ENCODE measurements at regions of chr16 and their contacts with region 1.

Region 1: DNA sequence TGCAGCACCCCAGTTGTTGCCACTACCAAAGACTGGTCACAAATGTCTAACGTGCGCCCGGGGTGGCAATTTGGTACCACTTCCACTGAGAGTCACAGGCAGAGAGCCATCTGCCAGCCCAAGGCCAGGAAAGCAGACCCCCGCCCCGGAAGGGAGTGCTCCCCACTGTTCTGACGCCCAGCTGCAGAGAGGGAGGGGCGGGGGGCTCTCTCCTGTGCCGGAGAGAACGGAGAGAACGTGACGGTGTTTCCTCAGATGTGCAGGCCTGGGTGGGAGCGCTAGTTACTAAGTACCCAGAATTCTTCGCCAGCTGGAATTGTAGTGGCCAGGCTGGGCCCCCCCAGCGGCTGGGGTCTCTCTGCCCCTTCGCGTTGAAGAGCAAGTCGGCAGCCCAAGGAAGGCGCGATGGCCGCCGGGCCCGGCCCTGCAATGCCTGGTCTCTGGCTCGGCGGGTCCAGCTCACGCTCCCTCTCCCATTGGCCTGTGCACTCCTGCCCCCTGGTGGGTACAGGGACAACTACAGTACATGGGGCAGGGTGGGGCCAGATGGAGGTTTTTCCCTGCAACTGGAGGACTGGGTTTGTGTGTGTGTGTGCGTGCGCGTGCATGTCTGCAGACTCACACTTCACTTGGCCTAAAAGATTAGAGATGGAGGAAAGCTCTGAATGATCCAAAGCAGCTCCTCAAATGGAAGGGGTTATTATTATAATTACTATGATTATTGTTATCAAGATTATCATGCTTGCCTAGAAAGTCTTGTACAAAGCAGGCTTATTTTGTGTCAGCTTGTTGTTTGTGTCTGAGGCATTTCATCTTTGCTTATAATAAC is 107.1 kb downstream of the AMFR start:
- DNase-seq: peak; percentile 67 to 79 (median 72)
- H3K4me3 ChIP-seq: peak overlapping the region in 1 of 2 donors; percentile 25
- H3K4me3 Mint-ChIP-seq: peak overlapping the region; percentile 39 to 80 (median 57)
- H3K27ac ChIP-seq: no peak overlapping the region
- H3K27ac Mint-ChIP-seq: peak overlapping the region in 2 of 7 donors; percentile 32 to 36
- H3K4me1 ChIP-seq: peaks cover 6% of the 10 kb centered on the region
- H3K4me1 Mint-ChIP-seq: peaks cover 0 to 10% (median 8%) of the 10 kb centered on the region in 4 donors
- H3K27me3 ChIP-seq: no peaks in the 10 kb centered on the region
- H3K27me3 Mint-ChIP-seq: no peaks in the 10 kb centered on the region

Region 2: GRCh38 chr16:55465077-55465896 is 852.9 kb before region 1 on chr16:
- CTCF ChIA-PET with region 1: interaction called, 14 read pairs
- POLR2A ChIA-PET with region 1: no interaction called
- intact Hi-C with region 1: no loop called
- DNase-seq: peak; percentile 70 to 79 (median 74)
- H3K4me3 ChIP-seq: no peak overlapping the region
- H3K4me3 Mint-ChIP-seq: peak overlapping the region in 1 of 8 donors; percentile 22
- H3K27ac ChIP-seq: no peak overlapping the region
- H3K27ac Mint-ChIP-seq: no peak overlapping the region
- H3K4me1 ChIP-seq: no peaks in the 10 kb centered on the region
- H3K4me1 Mint-ChIP-seq: peaks cover 0 to 5% (median 1%) of the 10 kb centered on the region in 4 donors
- H3K27me3 ChIP-seq: no peaks in the 10 kb centered on the region
- H3K27me3 Mint-ChIP-seq: peaks cover 0 to 3% of the 10 kb centered on the region in 2 donors

Region 3: GRCh38 chr16:55944377-55944802 is 373.8 kb before region 1 on chr16:
- CTCF ChIA-PET with region 1: interaction called, 222 read pairs
- POLR2A ChIA-PET with region 1: interaction called, 4 read pairs
- intact Hi-C with region 1: no loop called
- DNase-seq: peak; percentile 40 to 48 (median 44)
- H3K4me3 ChIP-seq: no peak overlapping the region
- H3K4me3 Mint-ChIP-seq: no peak overlapping the region
- H3K27ac ChIP-seq: no peak overlapping the region
- H3K27ac Mint-ChIP-seq: no peak overlapping the region
- H3K4me1 ChIP-seq: no peaks in the 10 kb centered on the region
- H3K4me1 Mint-ChIP-seq: peaks cover 0 to 2% (median 0%) of the 10 kb centered on the region in 4 donors
- H3K27me3 ChIP-seq: no peaks in the 10 kb centered on the region
- H3K27me3 Mint-ChIP-seq: peaks cover 39 to 40% of the 10 kb centered on the region in 2 donors

Region 4: DNA sequence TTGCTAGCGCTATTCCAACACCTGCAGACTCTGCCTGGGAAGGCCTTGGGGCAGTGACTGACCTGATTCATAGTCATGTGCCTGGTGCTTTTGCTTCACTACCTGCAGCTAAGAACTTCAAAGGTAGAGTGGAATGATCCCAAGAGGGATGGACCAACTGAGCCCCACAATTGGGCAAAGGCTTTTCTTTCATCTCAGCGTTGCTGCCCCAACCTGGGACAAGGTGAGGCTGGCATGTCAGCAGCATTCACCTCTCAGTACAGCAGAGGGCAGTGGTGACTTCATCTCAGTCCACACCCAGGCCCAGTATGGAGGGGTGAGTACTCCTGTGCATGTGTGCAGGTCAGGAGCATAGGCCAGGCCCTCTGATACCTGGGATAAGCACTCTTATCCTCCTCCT is 276.5 kb before region 1 on chr16:
- CTCF ChIA-PET with region 1: interaction called, 55 read pairs
- POLR2A ChIA-PET with region 1: interaction called, 5 read pairs
- intact Hi-C with region 1: no loop called
- DNase-seq: peak in 4 of 5 donors; percentile 25 to 47 (median 36)
- H3K4me3 ChIP-seq: no peak overlapping the region
- H3K4me3 Mint-ChIP-seq: no peak overlapping the region
- H3K27ac ChIP-seq: no peak overlapping the region
- H3K27ac Mint-ChIP-seq: no peak overlapping the region
- H3K4me1 ChIP-seq: no peaks in the 10 kb centered on the region
- H3K4me1 Mint-ChIP-seq: no peaks in the 10 kb centered on the region
- H3K27me3 ChIP-seq: no peaks in the 10 kb centered on the region
- H3K27me3 Mint-ChIP-seq: peaks cover 0 to 4% of the 10 kb centered on the region in 2 donors

Region 5: GRCh38 chr16:56183266-56183665 is 134.9 kb before region 1 on chr16:
- CTCF ChIA-PET with region 1: no interaction called
- POLR2A ChIA-PET with region 1: no interaction called
- intact Hi-C with region 1: no loop called
- DNase-seq: no peak
- H3K4me3 ChIP-seq: no peak overlapping the region
- H3K4me3 Mint-ChIP-seq: no peak overlapping the region
- H3K27ac ChIP-seq: no peak overlapping the region
- H3K27ac Mint-ChIP-seq: no peak overlapping the region
- H3K4me1 ChIP-seq: no peaks in the 10 kb centered on the region
- H3K4me1 Mint-ChIP-seq: peaks cover 0 to 1% (median 0%) of the 10 kb centered on the region in 4 donors
- H3K27me3 ChIP-seq: no peaks in the 10 kb centered on the region
- H3K27me3 Mint-ChIP-seq: peaks cover 0 to 6% of the 10 kb centered on the region in 2 donors

Region 6: DNA sequence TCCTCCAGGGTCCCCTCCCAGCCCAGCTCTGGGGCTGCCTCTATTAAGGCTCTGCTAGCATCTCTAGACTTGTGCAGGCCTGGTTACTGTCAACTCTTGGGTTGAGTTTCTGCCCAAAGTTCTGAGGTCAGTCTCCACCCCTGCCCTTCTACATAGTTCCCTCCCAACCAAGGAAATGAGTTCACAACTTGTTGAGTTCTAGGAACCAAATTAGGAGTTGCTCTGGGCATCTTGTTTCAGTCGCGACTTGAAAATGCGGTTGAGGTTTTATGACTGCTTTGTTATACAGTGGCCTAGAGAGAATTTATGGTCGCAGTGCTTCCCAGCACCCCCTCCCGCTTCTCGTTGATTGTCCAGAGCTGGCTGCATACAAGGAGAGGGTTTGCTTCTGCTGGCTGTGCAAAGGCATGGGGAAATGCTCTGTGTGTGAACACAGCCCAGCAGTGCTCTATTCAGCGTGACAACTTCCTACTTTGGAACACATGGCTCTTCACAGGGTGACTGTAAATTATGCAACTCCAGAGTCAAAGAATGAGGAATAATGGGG is 106.7 kb before region 1 on chr16:
- CTCF ChIA-PET with region 1: interaction called, 13 read pairs
- POLR2A ChIA-PET with region 1: no interaction called
- intact Hi-C with region 1: no loop called
- DNase-seq: no peak
- H3K4me3 ChIP-seq: no peak overlapping the region
- H3K4me3 Mint-ChIP-seq: no peak overlapping the region
- H3K27ac ChIP-seq: no peak overlapping the region
- H3K27ac Mint-ChIP-seq: no peak overlapping the region
- H3K4me1 ChIP-seq: no peaks in the 10 kb centered on the region
- H3K4me1 Mint-ChIP-seq: peaks cover 1 to 9% (median 3%) of the 10 kb centered on the region in 4 donors
- H3K27me3 ChIP-seq: no peaks in the 10 kb centered on the region
- H3K27me3 Mint-ChIP-seq: peaks cover 2 to 7% of the 10 kb centered on the region in 2 donors

Region 7: GRCh38 chr16:56262148-56262547 is 56.1 kb before region 1 on chr16:
- CTCF ChIA-PET with region 1: interaction called, 26 read pairs
- POLR2A ChIA-PET with region 1: interaction called, 3 read pairs
- intact Hi-C with region 1: loop called (anchors 1 kb)
- DNase-seq: peak; percentile 74 to 88 (median 84)
- H3K4me3 ChIP-seq: peak overlapping the region; percentile 2 to 45
- H3K4me3 Mint-ChIP-seq: peak overlapping the region; percentile 47 to 82 (median 65)
- H3K27ac ChIP-seq: peak overlapping the region; percentile 45
- H3K27ac Mint-ChIP-seq: peak overlapping the region; percentile 77 to 97 (median 89)
- H3K4me1 ChIP-seq: peaks cover 59% of the 10 kb centered on the region
- H3K4me1 Mint-ChIP-seq: peaks cover 36 to 75% (median 52%) of the 10 kb centered on the region in 4 donors
- H3K27me3 ChIP-seq: no peaks in the 10 kb centered on the region
- H3K27me3 Mint-ChIP-seq: no peaks in the 10 kb centered on the region

Region 8: GRCh38 chr16:56305956-56306565 is 12.2 kb before region 1 on chr16:
- CTCF ChIA-PET with region 1: interaction called, 19 read pairs
- POLR2A ChIA-PET with region 1: interaction called, 3 read pairs
- intact Hi-C with region 1: no loop called
- DNase-seq: no peak
- H3K4me3 ChIP-seq: no peak overlapping the region
- H3K4me3 Mint-ChIP-seq: no peak overlapping the region
- H3K27ac ChIP-seq: no peak overlapping the region
- H3K27ac Mint-ChIP-seq: no peak overlapping the region
- H3K4me1 ChIP-seq: no peaks in the 10 kb centered on the region
- H3K4me1 Mint-ChIP-seq: peaks cover 0 to 10% (median 2%) of the 10 kb centered on the region in 4 donors
- H3K27me3 ChIP-seq: no peaks in the 10 kb centered on the region
- H3K27me3 Mint-ChIP-seq: no peaks in the 10 kb centered on the region

Region 9: GRCh38 chr16:56462064-56462796 is 144.0 kb after region 1 on chr16:
- CTCF ChIA-PET with region 1: no interaction called
- POLR2A ChIA-PET with region 1: no interaction called
- intact Hi-C with region 1: no loop called
- DNase-seq: no peak
- H3K4me3 ChIP-seq: no peak overlapping the region
- H3K4me3 Mint-ChIP-seq: no peak overlapping the region
- H3K27ac ChIP-seq: no peak overlapping the region
- H3K27ac Mint-ChIP-seq: peak overlapping the region in 2 of 7 donors; percentile 5 to 19
- H3K4me1 ChIP-seq: no peaks in the 10 kb centered on the region
- H3K4me1 Mint-ChIP-seq: peaks cover 0 to 11% (median 6%) of the 10 kb centered on the region in 4 donors
- H3K27me3 ChIP-seq: no peaks in the 10 kb centered on the region
- H3K27me3 Mint-ChIP-seq: no peaks in the 10 kb centered on the region